CD14-positive monocyte (primary cell): ENCODE measurements at regions of chr14 and their contacts with region 1.

Region 1: GRCh38 chr14:105627711-105628110 is 101.3 kb downstream of the TMEM121 start:
- DNase-seq: no peak
- H3K4me3 ChIP-seq: no peak overlapping the region
- H3K4me3 Mint-ChIP-seq: no peak overlapping the region
- H3K27ac ChIP-seq: no peak overlapping the region
- H3K27ac Mint-ChIP-seq: no peak overlapping the region
- H3K4me1 ChIP-seq: no peaks in the 10 kb centered on the region
- H3K4me1 Mint-ChIP-seq: no peaks in the 10 kb centered on the region
- H3K27me3 ChIP-seq: no peaks in the 10 kb centered on the region
- H3K27me3 Mint-ChIP-seq: peaks cover 4 to 5% (median 5%) of the 10 kb centered on the region in 3 donors
- CTCF ChIP-seq: no peak

Region 2: GRCh38 chr14:105617201-105617777 is 10.4 kb before region 1 on chr14:
- intact Hi-C with region 1: loop called in 1 of 2 experiments (anchors 2 kb)
- DNase-seq: no peak
- H3K4me3 ChIP-seq: no peak overlapping the region
- H3K4me3 Mint-ChIP-seq: no peak overlapping the region
- H3K27ac ChIP-seq: no peak overlapping the region
- H3K27ac Mint-ChIP-seq: no peak overlapping the region
- H3K4me1 ChIP-seq: no peaks in the 10 kb centered on the region
- H3K4me1 Mint-ChIP-seq: no peaks in the 10 kb centered on the region
- H3K27me3 ChIP-seq: no peaks in the 10 kb centered on the region
- H3K27me3 Mint-ChIP-seq: peaks cover 1 to 3% (median 1%) of the 10 kb centered on the region in 3 donors
- CTCF ChIP-seq: no peak

Region 3: DNA sequence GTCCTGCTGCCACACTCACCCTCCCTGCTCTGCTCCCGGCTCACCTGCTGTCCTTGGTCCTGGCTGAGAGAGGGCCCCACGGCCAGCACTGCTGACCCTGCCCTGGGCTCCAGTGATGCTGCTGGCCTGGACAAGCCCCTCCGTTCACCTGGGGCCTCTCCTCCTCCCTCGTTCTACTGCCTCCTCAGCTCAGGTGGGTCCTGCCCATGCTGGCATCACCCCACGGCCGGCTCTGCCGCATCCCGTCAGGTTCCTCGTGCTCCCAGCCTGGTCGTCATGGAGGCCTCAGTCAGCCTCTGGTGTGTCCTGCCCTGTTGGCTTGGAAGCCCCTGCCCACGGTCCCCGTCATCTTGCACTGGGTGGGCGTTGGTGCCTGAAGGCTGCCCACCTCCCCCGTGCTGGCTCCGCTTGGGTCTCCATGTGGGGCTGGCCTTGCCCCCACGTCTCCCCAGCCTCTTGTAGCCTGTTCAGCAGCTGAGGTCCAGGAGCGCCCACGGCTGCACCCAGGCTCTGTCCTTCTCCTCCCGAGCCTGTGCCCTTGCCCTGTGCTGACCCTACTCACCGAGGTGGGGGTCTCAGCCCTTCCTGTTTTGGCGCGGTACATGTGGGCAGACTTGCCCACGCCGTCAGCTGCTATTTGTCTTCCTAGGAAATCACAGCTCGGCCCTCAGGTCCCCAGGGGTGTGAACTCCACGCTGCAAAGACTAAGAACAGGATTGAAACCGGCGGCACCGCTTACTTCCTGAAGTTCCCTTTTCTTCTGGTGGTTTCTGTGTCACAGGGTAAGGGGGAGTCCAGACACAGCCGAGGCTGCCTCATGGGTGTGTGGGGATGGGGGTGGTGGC is 20.3 kb after region 1 on chr14:
- intact Hi-C with region 1: loop called in 1 of 2 experiments (anchors 2 kb)
- DNase-seq: peak in 1 of 3 donors; percentile 11
- H3K4me3 ChIP-seq: no peak overlapping the region
- H3K4me3 Mint-ChIP-seq: peak overlapping the region; percentile 11 to 31
- H3K27ac ChIP-seq: no peak overlapping the region
- H3K27ac Mint-ChIP-seq: peak overlapping the region in 1 of 7 donors; percentile 54
- H3K4me1 ChIP-seq: no peaks in the 10 kb centered on the region
- H3K4me1 Mint-ChIP-seq: no peaks in the 10 kb centered on the region
- H3K27me3 ChIP-seq: no peaks in the 10 kb centered on the region
- H3K27me3 Mint-ChIP-seq: peaks cover 0 to 1% (median 0%) of the 10 kb centered on the region in 3 donors
- CTCF ChIP-seq: no peak